PC-3 (cell line): ENCODE measurements at regions of chr21 and their contacts with region 1.

Region 1: DNA sequence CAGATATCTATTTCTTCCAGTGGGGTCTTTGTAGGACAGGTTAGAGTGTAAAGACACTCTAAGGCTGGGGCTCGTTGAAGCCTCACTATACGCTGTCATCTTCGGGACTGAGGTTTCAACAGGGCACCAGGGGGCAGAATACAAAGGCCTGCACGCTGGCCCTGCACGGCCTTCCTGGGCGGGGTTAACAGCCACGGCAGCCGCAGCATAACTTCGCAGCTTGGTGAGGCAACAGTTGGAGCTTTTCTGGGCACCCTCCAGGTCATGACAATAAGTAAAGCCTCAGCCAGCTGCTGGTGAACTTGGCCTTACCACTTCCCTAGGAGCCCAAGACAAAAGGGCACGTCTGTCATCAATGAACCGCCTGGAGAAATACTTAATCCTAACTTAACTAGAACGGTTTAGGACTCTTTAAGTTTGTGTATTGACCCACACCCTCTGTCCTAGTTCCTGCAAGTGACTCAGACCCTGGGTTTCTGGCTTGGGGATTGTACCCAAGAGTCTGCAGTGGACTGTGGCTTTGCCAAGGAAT is 2.3 kb upstream of the RUNX1 start:
- DNase-seq: peak; percentile 97
- ATAC-seq: peak; percentile 59
- H3K4me3 ChIP-seq: peak overlapping the region; percentile 23; the same call in 1 of the 2 replicates
- H3K27ac ChIP-seq: peak overlapping the region; percentile 91
- H3K4me1 ChIP-seq: peaks cover 46% of the 10 kb centered on the region
- H3K27me3 ChIP-seq: no peaks in the 10 kb centered on the region
- CTCF ChIP-seq: peak; percentile 88

Region 2: GRCh38 chr21:34888569-34889319 is 162.6 kb before region 1 on chr21:
- CTCF ChIA-PET with region 1: interaction called, 18 read pairs
- POLR2A ChIA-PET with region 1: interaction called, 30 read pairs
- intact Hi-C with region 1: loop called (anchors 1 kb)
- DNase-seq: peak; percentile 97
- ATAC-seq: peak; percentile 52
- H3K4me3 ChIP-seq: peak overlapping the region; percentile 95
- H3K27ac ChIP-seq: peak overlapping the region; percentile 90
- H3K4me1 ChIP-seq: peaks cover 16% of the 10 kb centered on the region; the same call in 1 of the 2 replicates
- H3K27me3 ChIP-seq: no peaks in the 10 kb centered on the region
- CTCF ChIP-seq: no peak

Region 3: DNA sequence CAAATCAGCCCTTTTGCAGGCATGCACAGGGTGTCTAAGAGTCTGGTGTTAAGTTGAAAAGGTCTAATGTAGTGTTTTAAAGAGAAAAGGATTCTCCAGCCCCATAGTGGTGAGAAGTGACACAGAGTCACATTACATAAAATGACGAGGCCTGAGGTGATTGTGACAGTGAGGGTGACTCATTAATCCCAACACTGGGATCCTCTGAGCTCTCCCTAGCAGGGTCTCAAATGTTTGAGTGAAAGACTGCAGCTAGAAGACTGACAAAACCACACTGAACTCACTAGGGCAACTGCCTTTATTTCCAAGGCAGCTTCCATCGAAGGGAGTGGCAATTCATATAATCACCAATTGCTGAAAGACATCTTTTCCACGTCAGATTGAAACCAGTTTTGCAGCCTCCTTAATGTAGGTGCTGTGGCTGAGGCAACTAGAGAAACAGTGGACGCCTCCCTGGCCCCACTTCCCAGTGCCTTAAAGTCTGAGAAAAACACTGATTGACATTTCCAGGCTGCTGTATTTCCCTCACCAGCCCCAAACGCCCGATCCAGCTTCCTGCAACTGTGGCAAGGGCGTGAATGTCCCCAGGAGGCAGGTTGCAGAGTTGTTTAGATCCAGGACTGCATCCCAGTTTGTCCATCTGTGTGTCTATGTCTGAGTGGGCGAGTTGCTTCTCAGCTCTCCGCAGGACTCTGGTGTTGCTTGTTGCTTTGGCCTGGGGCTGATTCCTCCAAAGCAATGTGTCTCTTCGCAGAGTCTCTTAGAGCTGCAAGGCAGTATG is 83.7 kb before region 1 on chr21:
- CTCF ChIA-PET with region 1: no interaction called
- POLR2A ChIA-PET with region 1: no interaction called
- intact Hi-C with region 1: loop called (anchors 1 kb)
- DNase-seq: peak; percentile 88
- ATAC-seq: peak; percentile 55
- H3K4me3 ChIP-seq: no peak overlapping the region
- H3K27ac ChIP-seq: peak overlapping the region; percentile 85
- H3K4me1 ChIP-seq: peaks cover 42% of the 10 kb centered on the region
- H3K27me3 ChIP-seq: no peaks in the 10 kb centered on the region
- CTCF ChIP-seq: no peak

Region 4: GRCh38 chr21:34989337-34990151 is 61.8 kb before region 1 on chr21:
- CTCF ChIA-PET with region 1: no interaction called
- POLR2A ChIA-PET with region 1: no interaction called
- intact Hi-C with region 1: no loop called
- DNase-seq: no peak
- ATAC-seq: no peak
- H3K4me3 ChIP-seq: no peak overlapping the region
- H3K27ac ChIP-seq: no peak overlapping the region
- H3K4me1 ChIP-seq: peaks cover 10% of the 10 kb centered on the region
- H3K27me3 ChIP-seq: no peaks in the 10 kb centered on the region
- CTCF ChIP-seq: no peak

Region 5: DNA sequence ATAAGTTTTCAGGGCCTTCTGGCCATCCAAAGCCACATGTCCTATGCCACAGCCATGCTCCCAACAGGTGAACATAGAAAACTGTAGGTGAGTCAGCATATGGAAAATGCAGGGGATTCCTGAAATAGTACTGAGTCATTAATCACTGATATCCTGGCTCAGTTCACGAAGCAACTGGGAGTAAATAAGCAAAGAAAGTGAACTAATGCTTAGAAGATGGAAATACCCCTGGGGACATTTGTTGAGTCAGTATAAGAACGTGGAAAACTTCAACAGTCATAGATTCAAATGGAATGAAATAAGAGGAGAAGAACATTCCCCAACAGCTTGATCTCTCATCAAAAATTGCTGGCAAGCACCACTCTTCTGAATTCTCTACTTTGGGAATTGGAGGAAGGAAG is 146.7 kb after region 1 on chr21:
- CTCF ChIA-PET with region 1: no interaction called
- POLR2A ChIA-PET with region 1: no interaction called
- intact Hi-C with region 1: loop called (anchors 1 kb)
- DNase-seq: peak; percentile 99
- ATAC-seq: peak; percentile 89
- H3K4me3 ChIP-seq: no peak overlapping the region
- H3K27ac ChIP-seq: peak overlapping the region; percentile 91
- H3K4me1 ChIP-seq: peaks cover 60% of the 10 kb centered on the region
- H3K27me3 ChIP-seq: no peaks in the 10 kb centered on the region
- CTCF ChIP-seq: no peak

Region 6: GRCh38 chr21:35256467-35256988 is 205.2 kb after region 1 on chr21:
- CTCF ChIA-PET with region 1: no interaction called
- POLR2A ChIA-PET with region 1: interaction called, 6 read pairs
- intact Hi-C with region 1: loop called (anchors 1 kb)
- DNase-seq: peak; percentile 98
- ATAC-seq: peak; percentile 87
- H3K4me3 ChIP-seq: peak overlapping the region; percentile 58
- H3K27ac ChIP-seq: peak overlapping the region; percentile 92
- H3K4me1 ChIP-seq: peaks cover 58% of the 10 kb centered on the region
- H3K27me3 ChIP-seq: no peaks in the 10 kb centered on the region
- CTCF ChIP-seq: no peak

Region 7: DNA sequence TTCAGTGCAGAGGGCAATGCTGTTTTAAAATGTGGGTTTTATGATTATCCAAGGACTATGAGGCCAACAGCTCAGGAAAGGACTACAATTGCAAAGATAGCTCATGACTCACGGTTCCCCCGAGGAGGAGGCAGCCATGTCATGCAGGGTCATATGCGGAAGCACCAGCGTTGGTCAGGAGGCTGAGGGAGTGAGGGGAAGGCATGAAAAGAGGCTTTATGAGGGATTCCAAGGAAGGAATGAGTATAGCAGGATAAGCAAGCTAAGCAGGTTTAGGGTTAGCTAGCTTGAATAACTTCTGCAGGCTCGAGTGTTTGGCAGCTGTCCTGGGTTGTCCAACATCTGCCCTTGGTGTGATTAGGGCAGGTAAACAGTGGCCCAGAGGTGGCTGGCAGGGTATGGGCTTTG is 513.9 kb after region 1 on chr21:
- CTCF ChIA-PET with region 1: no interaction called
- POLR2A ChIA-PET with region 1: interaction called, 10 read pairs
- intact Hi-C with region 1: no loop called
- DNase-seq: peak; percentile 93
- ATAC-seq: peak; percentile 68
- H3K4me3 ChIP-seq: no peak overlapping the region
- H3K27ac ChIP-seq: peak overlapping the region; percentile 60
- H3K4me1 ChIP-seq: peaks cover 13% of the 10 kb centered on the region
- H3K27me3 ChIP-seq: no peaks in the 10 kb centered on the region
- CTCF ChIP-seq: no peak

Region 8: DNA sequence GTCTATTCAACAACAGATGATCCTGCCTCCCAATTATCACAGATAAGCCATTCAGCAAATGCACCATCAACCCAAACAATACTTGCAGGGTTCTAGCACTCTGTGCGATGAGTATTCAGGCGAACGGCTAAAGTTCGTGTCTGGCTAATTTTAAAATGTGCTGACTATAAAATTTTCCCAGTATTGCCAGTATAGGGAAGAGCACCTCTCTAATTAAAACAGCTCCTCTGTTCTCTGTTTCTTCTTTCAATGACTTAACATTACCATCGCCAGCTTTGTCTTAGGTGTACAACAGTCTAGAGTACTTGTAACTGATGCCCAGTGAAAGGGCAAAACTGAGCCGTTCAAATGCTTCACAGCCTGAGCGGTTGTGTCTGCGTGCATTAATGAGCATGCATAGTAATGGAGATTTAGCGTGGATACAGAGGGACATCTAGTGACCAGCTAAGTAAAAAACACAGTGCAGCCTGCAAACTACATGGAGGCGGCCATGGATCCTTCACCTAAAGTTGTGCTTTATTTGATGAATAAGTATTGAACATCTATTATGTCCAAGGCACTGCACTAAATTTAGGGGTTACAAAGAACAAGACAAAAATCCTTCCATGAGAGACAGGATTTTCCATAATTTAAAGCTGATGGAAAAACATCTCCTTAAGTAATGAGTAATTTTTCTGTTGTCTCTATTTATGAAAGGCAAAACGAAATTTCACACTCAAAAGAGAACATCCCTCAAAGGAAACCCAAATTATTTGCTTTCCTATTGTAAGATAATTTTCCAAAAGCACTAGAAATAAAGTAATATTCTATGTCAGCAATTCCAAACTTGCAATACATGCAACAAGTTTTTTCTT is 888.9 kb after region 1 on chr21:
- CTCF ChIA-PET with region 1: no interaction called
- POLR2A ChIA-PET with region 1: no interaction called
- intact Hi-C with region 1: loop called (anchors 2 kb)
- DNase-seq: peak; percentile 86
- ATAC-seq: peak; percentile 99
- H3K4me3 ChIP-seq: no peak overlapping the region
- H3K27ac ChIP-seq: no peak overlapping the region
- H3K4me1 ChIP-seq: peaks cover 4% of the 10 kb centered on the region
- H3K27me3 ChIP-seq: no peaks in the 10 kb centered on the region
- CTCF ChIP-seq: peak; percentile 91